CD8-positive, alpha-beta T cell (primary cell): ENCODE measurements at regions of chr16 and their contacts with region 1.

Region 1: GRCh38 chr16:70380861-70381603 is 34.3 kb downstream of the DDX19A start:
- DNase-seq: peak; percentile 90 to 98 (median 96)
- ATAC-seq: peak; percentile 91
- H3K4me3 ChIP-seq: peak overlapping the region; percentile 67 to 84
- H3K4me3 Mint-ChIP-seq: peak overlapping the region; percentile 95
- H3K27ac ChIP-seq: peak overlapping the region; percentile 73 to 79
- H3K27ac Mint-ChIP-seq: peak overlapping the region; percentile 95
- H3K4me1 ChIP-seq: peaks cover 10% of the 10 kb centered on the region
- H3K4me1 Mint-ChIP-seq: peaks cover 21% of the 10 kb centered on the region
- H3K27me3 ChIP-seq: no peaks in the 10 kb centered on the region
- H3K27me3 Mint-ChIP-seq: no peaks in the 10 kb centered on the region
- CTCF ChIP-seq: no peak

Region 2: DNA sequence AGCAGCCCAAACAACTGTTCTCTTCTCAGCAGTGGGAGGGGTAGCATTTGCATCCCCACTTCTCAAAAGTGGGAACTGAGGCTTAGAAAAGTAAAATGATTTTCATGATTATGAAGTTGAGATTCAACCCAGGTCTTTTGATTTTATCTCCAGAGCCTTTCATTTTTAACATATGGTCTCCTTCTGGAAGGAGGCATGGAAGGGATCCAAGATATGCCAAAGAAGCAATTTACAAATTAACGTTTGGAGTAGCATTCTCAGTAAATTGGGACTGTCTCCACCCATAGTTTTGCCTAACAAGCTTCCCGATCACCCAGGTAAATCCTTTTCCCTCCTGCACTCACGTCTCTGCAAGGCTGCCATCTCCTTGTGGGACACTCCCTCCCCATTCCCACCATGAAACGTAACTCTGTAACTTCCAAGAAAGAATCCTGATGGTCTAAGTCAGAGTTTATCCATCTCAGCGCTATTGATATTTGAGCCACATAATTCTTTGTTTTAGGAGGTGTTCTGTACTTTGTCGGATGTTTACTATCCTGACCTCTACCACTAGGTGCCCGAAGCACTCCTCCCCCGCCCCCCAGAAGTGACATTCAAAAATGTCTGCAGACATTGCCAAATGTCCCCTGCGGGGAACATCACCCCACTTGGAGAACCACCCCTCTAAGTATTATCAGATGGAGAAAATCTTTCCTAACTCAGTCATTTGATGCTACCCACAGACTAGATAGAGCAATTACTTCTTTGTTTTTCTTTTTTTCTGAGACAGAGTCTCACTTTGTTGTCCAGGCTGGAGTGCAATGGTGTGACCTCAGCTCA is 848.2 kb before region 1 on chr16:
- CTCF ChIA-PET with region 1: no interaction called
- POLR2A ChIA-PET with region 1: no interaction called
- intact Hi-C with region 1: no loop called
- DNase-seq: no peak
- ATAC-seq: no peak
- H3K4me3 ChIP-seq: no peak overlapping the region
- H3K4me3 Mint-ChIP-seq: no peak overlapping the region
- H3K27ac ChIP-seq: no peak overlapping the region
- H3K27ac Mint-ChIP-seq: no peak overlapping the region
- H3K4me1 ChIP-seq: no peaks in the 10 kb centered on the region
- H3K4me1 Mint-ChIP-seq: peaks cover 10% of the 10 kb centered on the region
- H3K27me3 ChIP-seq: no peaks in the 10 kb centered on the region
- H3K27me3 Mint-ChIP-seq: no peaks in the 10 kb centered on the region
- CTCF ChIP-seq: no peak

Region 3: DNA sequence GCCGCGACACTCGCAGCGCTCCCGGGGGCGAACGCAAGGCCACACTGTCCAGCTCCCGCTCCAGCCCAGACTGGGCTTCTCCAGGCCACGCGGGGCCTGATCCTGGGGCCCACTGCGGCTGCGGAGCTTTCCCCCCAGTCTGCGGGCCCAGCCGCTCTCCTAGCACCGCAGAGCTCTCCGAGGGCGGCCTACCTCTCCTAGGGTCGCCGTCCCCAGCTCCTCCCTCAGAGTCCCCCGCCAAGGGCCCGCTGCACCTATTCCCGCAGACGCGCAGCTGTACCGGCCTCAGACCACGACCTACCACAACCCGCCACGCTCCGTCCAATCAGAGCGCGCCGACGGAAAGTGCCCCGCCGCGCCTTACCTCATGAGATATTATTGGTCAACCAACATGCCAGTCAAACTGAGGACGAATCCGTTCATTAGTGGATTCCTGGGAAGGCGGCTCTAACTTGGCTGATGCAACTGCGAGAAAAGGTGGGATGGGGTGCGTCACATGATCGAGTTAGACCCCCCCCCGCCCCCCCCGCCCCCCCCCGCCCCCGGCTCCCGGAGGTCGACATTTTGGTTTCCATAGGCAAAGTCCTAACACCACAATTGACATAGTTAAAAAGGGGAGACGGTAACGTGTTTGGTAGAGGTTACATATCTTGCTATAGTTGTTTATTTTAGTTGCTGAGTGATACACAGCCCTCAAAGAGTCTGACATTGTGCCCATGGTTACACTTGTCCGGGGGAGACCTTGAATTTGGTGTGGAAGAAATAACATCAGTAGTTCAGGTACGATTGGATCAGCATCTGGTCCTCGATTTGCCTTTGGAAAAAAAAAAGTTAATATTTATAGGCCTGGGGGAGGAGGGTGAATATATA is 91.6 kb before region 1 on chr16 and contains the start of gene AARS1:
- CTCF ChIA-PET with region 1: no interaction called
- POLR2A ChIA-PET with region 1: no interaction called
- intact Hi-C with region 1: loop called in 1 of 2 experiments (anchors 1 kb)
- DNase-seq: peak; percentile 87 to 99 (median 92)
- ATAC-seq: peak; percentile 93
- H3K4me3 ChIP-seq: peak within 1 kb of the TSS; percentile 75 to 81
- H3K4me3 Mint-ChIP-seq: peak within 1 kb of the TSS; percentile 100
- H3K27ac ChIP-seq: peak within 1 kb of the TSS; percentile 89 to 94
- H3K27ac Mint-ChIP-seq: peak within 1 kb of the TSS; percentile 99
- H3K4me1 ChIP-seq: peaks cover 10% of the 10 kb centered on the region
- H3K4me1 Mint-ChIP-seq: peaks cover 18% of the 10 kb centered on the region
- H3K27me3 ChIP-seq: no peaks in the 10 kb centered on the region
- H3K27me3 Mint-ChIP-seq: no peaks in the 10 kb centered on the region
- CTCF ChIP-seq: no peak
- total RNA-seq, gene AARS1: 10.1 to 10.6 TPM

Region 4: DNA sequence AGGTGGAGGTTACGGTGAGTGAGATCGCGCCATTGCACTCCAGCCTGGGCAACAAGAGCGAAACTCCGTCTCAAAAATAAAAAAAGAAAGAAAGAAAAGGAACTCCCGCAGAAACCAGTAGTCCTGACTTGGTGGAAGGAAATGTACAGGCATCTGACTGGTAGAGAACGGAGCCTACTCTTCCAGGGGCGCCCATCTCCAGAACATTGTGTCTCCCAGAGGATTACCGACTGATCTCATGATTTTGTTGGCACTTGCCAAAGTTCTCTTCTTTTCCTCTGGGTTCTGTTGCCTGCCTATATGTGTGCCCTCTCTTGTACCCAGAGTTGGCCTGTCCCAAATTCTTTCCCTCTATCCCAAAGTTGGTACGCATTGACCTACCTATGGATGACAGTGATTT is 10.1 kb before region 1 on chr16:
- CTCF ChIA-PET with region 1: interaction called, 4 read pairs
- POLR2A ChIA-PET with region 1: interaction called, 14 read pairs
- intact Hi-C with region 1: loop called in 1 of 2 experiments (anchors 1 kb)
- DNase-seq: no peak
- ATAC-seq: no peak
- H3K4me3 ChIP-seq: no peak overlapping the region
- H3K4me3 Mint-ChIP-seq: no peak overlapping the region
- H3K27ac ChIP-seq: no peak overlapping the region
- H3K27ac Mint-ChIP-seq: peak overlapping the region; percentile 55
- H3K4me1 ChIP-seq: peaks cover 7% of the 10 kb centered on the region
- H3K4me1 Mint-ChIP-seq: peaks cover 9% of the 10 kb centered on the region
- H3K27me3 ChIP-seq: no peaks in the 10 kb centered on the region
- H3K27me3 Mint-ChIP-seq: no peaks in the 10 kb centered on the region
- CTCF ChIP-seq: no peak

Region 5: GRCh38 chr16:70402916-70403659 is 22.1 kb after region 1 on chr16:
- CTCF ChIA-PET with region 1: no interaction called
- POLR2A ChIA-PET with region 1: interaction called, 13 read pairs
- intact Hi-C with region 1: loop called in 1 of 2 experiments (anchors 1 kb)
- DNase-seq: no peak
- ATAC-seq: no peak
- H3K4me3 ChIP-seq: no peak overlapping the region
- H3K4me3 Mint-ChIP-seq: no peak overlapping the region
- H3K27ac ChIP-seq: no peak overlapping the region
- H3K27ac Mint-ChIP-seq: peak overlapping the region; percentile 25
- H3K4me1 ChIP-seq: peaks cover 35% of the 10 kb centered on the region
- H3K4me1 Mint-ChIP-seq: peaks cover 46% of the 10 kb centered on the region
- H3K27me3 ChIP-seq: no peaks in the 10 kb centered on the region
- H3K27me3 Mint-ChIP-seq: no peaks in the 10 kb centered on the region
- CTCF ChIP-seq: no peak

Region 6: DNA sequence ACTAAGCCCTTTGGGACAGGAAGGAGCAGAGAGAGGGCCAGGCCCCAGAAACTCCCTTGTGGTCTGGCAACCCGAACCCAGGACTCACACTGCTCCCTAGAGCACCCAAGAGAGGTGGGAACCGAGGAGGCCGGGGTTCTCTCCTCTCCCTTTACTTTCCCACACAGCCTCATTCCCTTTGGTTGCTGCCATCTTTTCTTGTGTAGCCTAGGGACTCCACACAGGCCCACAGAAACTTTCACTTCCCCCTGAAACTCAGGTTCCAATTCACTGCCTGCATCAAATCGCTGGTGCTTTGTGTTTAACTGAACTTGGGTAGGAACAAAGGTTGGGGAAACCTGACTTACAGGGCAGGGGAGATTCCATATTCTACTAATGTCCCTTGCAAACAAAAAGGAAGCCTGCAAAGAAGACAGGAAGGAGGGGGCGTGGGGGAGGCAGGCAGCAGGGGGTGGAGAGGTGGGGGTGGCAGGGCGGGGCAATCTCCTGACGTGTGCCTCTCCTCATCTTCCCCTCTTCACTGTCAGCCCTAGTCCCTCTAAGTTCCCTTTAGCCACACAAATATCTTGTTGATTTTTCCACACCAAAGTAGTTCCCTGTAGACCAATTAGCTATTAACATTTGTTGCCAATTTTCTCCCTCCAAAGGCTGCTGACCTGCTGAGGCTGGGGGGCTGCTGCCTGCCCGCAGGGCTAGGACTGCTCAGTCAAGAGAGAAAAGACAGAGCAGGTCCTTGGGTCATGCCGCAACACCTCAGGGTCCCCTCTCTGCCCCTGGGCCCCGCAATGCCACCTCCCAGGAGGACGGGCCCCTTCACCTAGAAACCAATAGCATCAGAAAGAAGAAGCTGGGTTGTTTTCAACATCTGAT is 49.9 kb after region 1 on chr16:
- CTCF ChIA-PET with region 1: interaction called, 4 read pairs
- POLR2A ChIA-PET with region 1: interaction called, 8 read pairs
- intact Hi-C with region 1: loop called in 1 of 2 experiments (anchors 2 kb)
- DNase-seq: peak; percentile 10 to 91 (median 59)
- ATAC-seq: peak; percentile 90
- H3K4me3 ChIP-seq: peak overlapping the region; percentile 2 to 41
- H3K4me3 Mint-ChIP-seq: peak overlapping the region; percentile 73
- H3K27ac ChIP-seq: peak overlapping the region; percentile 56 to 80
- H3K27ac Mint-ChIP-seq: peak overlapping the region; percentile 95
- H3K4me1 ChIP-seq: peaks cover 68% of the 10 kb centered on the region
- H3K4me1 Mint-ChIP-seq: peaks cover 71% of the 10 kb centered on the region
- H3K27me3 ChIP-seq: no peaks in the 10 kb centered on the region
- H3K27me3 Mint-ChIP-seq: no peaks in the 10 kb centered on the region
- CTCF ChIP-seq: no peak

Region 7: GRCh38 chr16:70454222-70455034 is 73.4 kb after region 1 on chr16 and contains the start of gene FCSK:
- CTCF ChIA-PET with region 1: interaction called, 6 read pairs
- POLR2A ChIA-PET with region 1: interaction called, 32 read pairs
- intact Hi-C with region 1: loop called (anchors 1 kb)
- DNase-seq: peak; percentile 50 to 85 (median 70)
- ATAC-seq: peak; percentile 90
- H3K4me3 ChIP-seq: peak within 1 kb of the TSS; percentile 98 to 100
- H3K4me3 Mint-ChIP-seq: peak within 1 kb of the TSS; percentile 90
- H3K27ac ChIP-seq: peak within 1 kb of the TSS; percentile 76 to 97
- H3K27ac Mint-ChIP-seq: peak within 1 kb of the TSS; percentile 88
- H3K4me1 ChIP-seq: peaks cover 20% of the 10 kb centered on the region
- H3K4me1 Mint-ChIP-seq: peaks cover 27% of the 10 kb centered on the region
- H3K27me3 ChIP-seq: no peaks in the 10 kb centered on the region
- H3K27me3 Mint-ChIP-seq: no peaks in the 10 kb centered on the region
- CTCF ChIP-seq: no peak
- total RNA-seq, gene FCSK: 17.8 to 18.2 TPM